Esophagus squamous epithelium (tissue), 5 donors: ENCODE measurements at regions of chr15 and their contacts with region 1.

Region 1: DNA sequence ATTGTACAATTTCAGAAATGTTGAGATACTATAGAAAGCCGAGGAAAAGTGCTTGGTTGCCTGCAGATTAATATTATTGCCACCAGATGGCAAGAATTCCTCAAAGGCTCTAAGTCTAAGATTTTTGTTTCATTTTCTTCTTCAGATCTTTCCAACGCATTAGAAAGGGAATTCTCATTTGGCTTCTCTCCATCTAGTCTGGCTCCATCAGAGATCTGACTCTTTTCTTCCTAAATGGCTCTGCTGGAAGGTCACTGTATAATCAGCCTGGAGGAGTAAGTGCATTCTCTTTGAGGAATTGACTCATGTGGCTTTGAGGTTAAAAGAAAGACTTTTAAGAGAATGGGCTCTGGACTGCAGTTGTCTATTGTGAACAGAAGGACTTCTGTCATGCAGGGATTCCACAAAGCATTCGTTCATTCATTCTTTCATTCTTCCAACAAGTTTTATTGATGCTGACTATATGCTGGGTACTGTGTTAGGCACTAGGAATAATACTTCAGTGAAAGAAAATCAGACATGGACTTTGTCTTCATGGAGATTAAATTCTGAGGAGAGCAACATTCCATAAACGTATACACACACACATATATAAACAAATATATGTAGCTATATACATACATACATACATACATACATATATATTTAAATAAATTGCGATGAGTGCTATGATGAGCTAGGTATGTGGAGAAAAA is 55.3 kb downstream of the SLC28A2 start:
- DNase-seq: no peak
- H3K4me3 ChIP-seq: peak overlapping the region in 1 of 4 donors; percentile 52
- H3K27ac ChIP-seq: peak overlapping the region in 1 of 4 donors; percentile 28
- H3K4me1 ChIP-seq: peaks cover 0 to 11% (median 4%) of the 10 kb centered on the region in 3 donors
- H3K27me3 ChIP-seq: peaks cover 0 to 11% (median 0%) of the 10 kb centered on the region in 4 donors
- CTCF ChIP-seq: peak in 5 of 6 experiments; percentile 52 to 69 (median 58)
- POLR2A ChIP-seq: no peak

Region 2: DNA sequence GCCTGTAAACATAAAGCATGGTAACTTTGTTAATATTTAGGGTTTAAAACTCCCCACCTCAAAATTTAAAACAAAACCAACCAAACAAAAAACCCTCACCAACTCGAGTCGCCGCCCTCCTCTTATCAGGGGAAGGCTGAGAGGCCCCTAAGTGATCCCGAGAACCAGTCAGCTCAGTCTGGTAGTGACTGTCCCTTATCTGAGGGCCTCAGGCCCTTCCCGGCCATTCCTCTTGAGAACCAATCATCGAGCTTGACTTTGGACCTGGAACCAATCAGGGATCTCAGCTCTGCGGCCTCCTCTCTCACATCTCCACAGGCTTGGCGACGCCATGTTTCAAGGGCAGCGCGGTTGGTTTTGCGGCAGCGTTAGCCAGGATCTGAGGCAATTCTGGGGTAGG is 351.0 kb before region 1 on chr15 and contains the start of gene TERB2:
- intact Hi-C with region 1: no loop called
- DNase-seq: no peak
- H3K4me3 ChIP-seq: no peak within 1 kb of the TSS
- H3K27ac ChIP-seq: no peak within 1 kb of the TSS
- H3K4me1 ChIP-seq: no peaks in the 10 kb centered on the region
- H3K27me3 ChIP-seq: no peaks in the 10 kb centered on the region
- CTCF ChIP-seq: no peak
- POLR2A ChIP-seq: no peak
- total RNA-seq, gene TERB2: not detected

Region 3: DNA sequence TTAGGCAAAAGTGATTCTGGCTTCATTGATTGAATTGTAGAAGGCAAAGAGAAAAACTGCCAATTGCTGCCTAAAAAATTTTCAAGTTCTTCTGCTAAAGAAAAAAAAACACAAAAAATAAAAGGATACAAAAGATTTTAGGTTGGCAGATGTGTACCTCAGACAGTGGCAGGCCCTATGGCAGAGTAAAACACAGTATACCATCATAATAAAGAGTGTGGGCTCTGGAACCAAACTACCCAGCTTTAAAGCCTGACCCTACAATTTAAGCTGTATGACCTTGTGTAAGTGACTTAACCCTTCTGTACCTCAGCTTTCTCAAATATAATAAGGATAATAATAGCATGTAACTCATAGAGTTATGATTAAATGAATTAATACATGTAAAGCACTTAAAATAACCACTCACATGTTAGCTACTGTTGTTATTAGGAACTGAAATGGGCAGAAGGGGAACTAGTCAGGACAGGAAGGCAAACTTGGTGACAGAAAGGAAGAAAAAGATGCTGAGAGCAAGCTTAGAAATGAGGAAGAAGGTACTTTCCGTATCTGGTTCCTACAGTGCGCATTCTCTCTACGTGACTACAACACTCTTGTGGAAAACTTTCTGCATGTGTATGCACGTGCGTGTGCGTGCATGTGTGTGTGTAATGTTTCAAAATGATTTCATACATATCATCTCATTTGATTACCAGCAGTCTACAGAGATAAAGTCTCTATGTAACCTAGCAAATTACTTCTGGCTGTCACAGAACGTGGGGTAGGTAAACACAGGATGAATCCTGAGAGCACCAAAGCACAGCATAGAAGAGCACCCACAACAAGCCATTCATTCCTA is 84.6 kb after region 1 on chr15:
- intact Hi-C with region 1: loop called (anchors 5 kb)
- DNase-seq: no peak
- H3K4me3 ChIP-seq: no peak overlapping the region
- H3K27ac ChIP-seq: peak overlapping the region in 1 of 4 donors; percentile 8
- H3K4me1 ChIP-seq: peaks cover 0 to 16% (median 0%) of the 10 kb centered on the region in 3 donors
- H3K27me3 ChIP-seq: peaks cover 0 to 14% (median 0%) of the 10 kb centered on the region in 4 donors
- CTCF ChIP-seq: no peak
- POLR2A ChIP-seq: no peak